Prostate gland (tissue), 2 donors: ENCODE measurements at regions of chr20 and their contacts with region 1.

Region 1: GRCh38 chr20:49446808-49447207 is 35.7 kb downstream of the KCNB1 start:
- DNase-seq: peak; percentile 11
- H3K4me3 ChIP-seq: no peak overlapping the region
- H3K27ac ChIP-seq: peak overlapping the region; percentile 56 to 58
- H3K4me1 ChIP-seq: no peaks in the 10 kb centered on the region
- H3K27me3 ChIP-seq: no peaks in the 10 kb centered on the region
- CTCF ChIP-seq: peak in 2 of 4 experiments; percentile 15 to 36
- POLR2A ChIP-seq: no peak

Region 2: GRCh38 chr20:49400410-49400809 is 46.4 kb before region 1 on chr20:
- intact Hi-C with region 1: loop called (anchors 2 kb)
- DNase-seq: no peak
- H3K4me3 ChIP-seq: no peak overlapping the region
- H3K27ac ChIP-seq: peak overlapping the region; percentile 61 to 71
- H3K4me1 ChIP-seq: no peaks in the 10 kb centered on the region
- H3K27me3 ChIP-seq: no peaks in the 10 kb centered on the region
- CTCF ChIP-seq: no peak
- POLR2A ChIP-seq: no peak

Region 3: DNA sequence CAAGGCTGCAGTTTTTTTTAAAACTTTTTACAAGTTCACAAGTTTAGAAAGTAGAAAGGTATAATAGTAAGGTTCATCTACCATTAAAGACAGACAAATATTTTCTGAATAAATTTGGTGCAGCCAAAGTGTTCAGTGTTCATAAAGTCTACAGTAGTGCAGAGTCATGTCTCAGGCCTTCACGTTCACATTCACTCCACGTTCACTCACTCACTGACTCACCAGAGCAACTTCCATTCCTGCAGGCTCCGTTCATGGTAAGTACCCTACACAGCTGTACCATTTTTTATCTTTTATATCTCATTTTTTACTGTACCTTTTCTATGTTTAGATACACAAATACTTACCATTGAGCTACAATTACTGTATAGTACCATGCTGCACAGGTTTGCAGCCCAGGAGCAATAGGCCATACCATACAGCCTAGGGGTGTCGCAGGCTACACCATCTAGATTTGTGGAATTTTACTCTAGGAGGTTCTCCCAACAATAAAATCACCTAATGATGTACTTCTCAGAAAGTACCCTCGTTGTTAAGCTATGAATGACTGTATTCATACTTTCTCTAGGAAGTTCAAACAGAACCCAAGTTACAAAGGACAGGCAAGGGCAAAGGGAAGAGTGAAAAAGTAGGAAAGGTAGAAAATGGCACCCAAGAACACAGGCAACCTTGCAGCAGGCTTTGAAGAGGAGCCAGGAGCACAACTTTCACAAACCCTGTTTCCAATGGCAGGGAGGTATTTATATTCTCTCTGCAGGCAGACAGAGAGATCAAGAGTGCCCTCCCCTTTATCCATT is 199.5 kb after region 1 on chr20:
- intact Hi-C with region 1: no loop called
- DNase-seq: no peak
- H3K4me3 ChIP-seq: no peak overlapping the region
- H3K27ac ChIP-seq: no peak overlapping the region
- H3K4me1 ChIP-seq: no peaks in the 10 kb centered on the region
- H3K27me3 ChIP-seq: no peaks in the 10 kb centered on the region
- CTCF ChIP-seq: no peak
- POLR2A ChIP-seq: no peak